ENCODE measurements at regions of chr6 and their contacts with region 1.

Region 1: GRCh38 chr6:36123257-36124139 is 6.8 kb upstream of the MAPK13 start:
- DNase-seq: peak; percentile 83
- ATAC-seq: peak; percentile 63
- H3K4me3 ChIP-seq: 0 out of 6 replicates have a peak overlapping the region, but pooled peaks of 1 of the 3 experiments have one; percentile 17
- H3K27ac ChIP-seq: no peak overlapping the region
- H3K4me1 ChIP-seq: peaks cover 55% of the 10 kb centered on the region
- H3K27me3 ChIP-seq: no peaks in the 10 kb centered on the region
- CTCF ChIP-seq: peak; percentile 89
- EP300 ChIP-seq: no peak
- POLR2A ChIP-seq: no peak
- RAD21 ChIP-seq: peak; percentile 69

Region 2: GRCh38 chr6:36196880-36197548 is 73.5 kb after region 1 on chr6:
- CTCF ChIA-PET with region 1: interaction called, 20 read pairs
- POLR2A ChIA-PET with region 1: interaction called, 9 read pairs
- in situ Hi-C with region 1: no loop called
- intact Hi-C with region 1: no loop called
- DNase-seq: peak; percentile 96
- ATAC-seq: peak; percentile 95
- H3K4me3 ChIP-seq: peak overlapping the region; percentile 65 to 90 (median 81)
- H3K27ac ChIP-seq: peak overlapping the region; percentile 92
- H3K4me1 ChIP-seq: peaks cover 22% of the 10 kb centered on the region
- H3K27me3 ChIP-seq: no peaks in the 10 kb centered on the region
- CTCF ChIP-seq: no peak
- EP300 ChIP-seq: no peak
- POLR2A ChIP-seq: peak; percentile 70 to 75
- RAD21 ChIP-seq: no peak

Measured in HepG2 (cell line).